Cardiac septum (tissue), 1 donor: ENCODE measurements at regions of chr1 and their contacts with region 1.

Region 1: DNA sequence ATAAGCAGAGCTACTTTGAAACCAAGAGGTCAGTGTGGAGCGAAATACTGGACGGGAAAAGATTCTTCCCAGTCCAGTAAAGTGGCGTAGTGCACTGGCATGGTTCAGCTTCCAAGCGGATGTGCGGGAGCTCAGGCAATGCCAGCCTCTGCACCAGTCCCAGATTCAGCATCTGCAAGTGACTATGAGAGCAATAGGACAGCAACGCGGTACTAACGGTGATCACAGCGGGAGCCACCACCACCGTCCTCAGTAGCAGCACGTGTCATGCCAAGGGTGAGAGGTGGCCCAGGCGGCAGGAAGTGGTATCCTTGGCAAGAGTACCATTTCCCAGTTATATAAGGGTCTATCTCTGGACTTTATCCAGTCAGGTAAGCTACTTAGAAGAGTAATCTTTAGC is 17.8 kb downstream of the PLD5 start:
- DNase-seq: no peak

Region 2: GRCh38 chr1:242530761-242531160 is 24.0 kb after region 1 on chr1:
- intact Hi-C with region 1: loop called (anchors 1 kb)
- DNase-seq: no peak

Region 3: GRCh38 chr1:242542271-242542670 is 35.5 kb after region 1 on chr1:
- intact Hi-C with region 1: no loop called
- DNase-seq: no peak

Region 4: GRCh38 chr1:242554577-242554976 is 47.9 kb after region 1 on chr1:
- intact Hi-C with region 1: no loop called
- DNase-seq: no peak